Head of caudate nucleus (tissue), 42 donors: ENCODE measurements at regions of chr17 and their contacts with region 1.

Region 1: DNA sequence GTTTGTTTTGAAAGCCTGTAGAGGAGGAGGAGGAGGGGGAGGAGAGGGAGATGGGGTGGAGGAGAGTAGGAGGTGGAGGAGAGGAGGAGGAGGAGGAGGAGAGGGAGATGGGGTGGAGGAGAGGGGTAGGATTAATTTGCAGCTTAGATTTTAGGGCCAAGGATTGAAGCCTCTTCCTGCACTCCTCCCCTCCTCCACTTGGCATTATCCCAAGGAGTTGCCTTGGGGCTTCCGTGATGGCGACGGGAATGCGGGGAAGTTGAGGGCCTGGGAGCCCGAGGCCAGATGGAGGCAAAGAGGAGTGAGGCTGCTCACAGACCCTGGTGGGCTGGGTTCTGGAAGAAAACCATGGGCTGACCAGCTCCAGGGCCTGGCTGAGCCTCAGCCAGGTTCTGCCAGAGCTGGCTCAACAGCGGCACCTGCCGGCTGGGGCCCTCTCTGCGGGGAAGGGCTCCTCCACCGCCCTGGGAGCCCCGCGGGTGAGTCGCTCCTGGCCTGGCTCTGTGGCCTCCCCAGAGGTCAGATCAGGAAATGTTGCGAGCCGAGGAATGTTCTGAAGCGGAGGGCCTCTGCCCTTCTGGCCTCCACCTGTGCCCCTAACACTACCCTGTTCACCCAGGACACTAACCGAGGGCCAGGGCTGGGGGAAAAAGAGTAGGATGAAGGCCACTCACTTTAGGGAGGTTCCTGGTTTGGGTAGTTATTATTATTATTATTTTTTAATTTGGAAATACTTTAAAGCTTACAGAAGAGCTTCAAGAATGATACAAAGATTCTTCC is 23.9 kb upstream of the FMNL1 start:
- DNase-seq: peak; percentile 79 to 97 (median 92)

Region 2: GRCh38 chr17:45077643-45078042 is 120.1 kb before region 1 on chr17:
- intact Hi-C with region 1: no loop called
- DNase-seq: no peak

Region 3: GRCh38 chr17:45088741-45089140 is 109.0 kb before region 1 on chr17:
- intact Hi-C with region 1: no loop called
- DNase-seq: no peak

Region 4: DNA sequence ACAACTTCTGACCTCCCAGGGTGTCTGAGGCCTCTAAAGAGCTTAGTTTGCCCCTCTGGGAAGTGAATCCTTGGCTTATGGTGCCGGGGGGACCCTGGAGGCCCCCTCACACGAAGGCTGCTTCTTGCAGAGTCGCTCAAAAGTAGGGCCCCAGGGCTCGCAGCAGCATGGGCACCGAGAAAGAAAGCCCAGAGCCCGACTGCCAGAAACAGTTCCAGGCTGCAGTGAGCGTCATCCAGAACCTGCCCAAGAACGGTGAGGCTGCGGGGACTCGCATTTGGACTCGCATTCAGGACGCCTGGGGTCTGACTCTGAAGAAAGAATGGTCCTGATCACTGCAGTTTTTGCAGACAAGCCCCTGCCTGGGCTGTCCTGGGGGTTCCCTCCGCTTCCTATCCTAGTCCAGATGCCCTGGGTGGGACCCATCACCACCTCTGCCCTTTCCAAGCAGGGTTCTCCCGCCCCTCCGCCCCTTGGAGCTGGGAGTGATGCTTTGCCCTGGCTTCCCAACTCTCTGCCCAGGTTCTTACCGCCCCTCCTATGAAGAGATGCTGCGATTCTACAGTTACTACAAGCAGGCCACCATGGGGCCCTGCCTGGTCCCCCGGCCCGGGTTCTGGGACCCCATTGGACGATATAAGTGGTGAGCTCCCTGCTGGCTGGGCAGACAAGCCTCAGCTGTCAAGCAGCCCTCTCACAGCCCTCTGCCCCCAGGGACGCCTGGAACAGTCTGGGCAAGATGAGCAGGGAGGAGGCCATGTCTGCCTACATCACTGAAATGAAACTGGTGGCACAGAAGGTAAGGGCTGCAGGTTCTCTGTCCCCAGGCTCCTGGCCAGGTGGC is 61.5 kb before region 1 on chr17:
- intact Hi-C with region 1: loop called (anchors 2 kb)
- DNase-seq: peak in 3 of 42 donors; percentile 27 to 43 (median 28)

Region 5: GRCh38 chr17:45149669-45150664 is 47.8 kb before region 1 on chr17:
- intact Hi-C with region 1: loop called (anchors 5 kb)
- DNase-seq: peak in 41 of 42 donors; percentile 47 to 84 (median 67)

Region 6: GRCh38 chr17:45228763-45229539 is 31.2 kb after region 1 on chr17:
- intact Hi-C with region 1: no loop called
- DNase-seq: peak in 39 of 42 donors; percentile 26 to 78 (median 55)